Esophagus squamous epithelium (tissue), 5 donors: ENCODE measurements at regions of chr16 and their contacts with region 1.

Region 1: DNA sequence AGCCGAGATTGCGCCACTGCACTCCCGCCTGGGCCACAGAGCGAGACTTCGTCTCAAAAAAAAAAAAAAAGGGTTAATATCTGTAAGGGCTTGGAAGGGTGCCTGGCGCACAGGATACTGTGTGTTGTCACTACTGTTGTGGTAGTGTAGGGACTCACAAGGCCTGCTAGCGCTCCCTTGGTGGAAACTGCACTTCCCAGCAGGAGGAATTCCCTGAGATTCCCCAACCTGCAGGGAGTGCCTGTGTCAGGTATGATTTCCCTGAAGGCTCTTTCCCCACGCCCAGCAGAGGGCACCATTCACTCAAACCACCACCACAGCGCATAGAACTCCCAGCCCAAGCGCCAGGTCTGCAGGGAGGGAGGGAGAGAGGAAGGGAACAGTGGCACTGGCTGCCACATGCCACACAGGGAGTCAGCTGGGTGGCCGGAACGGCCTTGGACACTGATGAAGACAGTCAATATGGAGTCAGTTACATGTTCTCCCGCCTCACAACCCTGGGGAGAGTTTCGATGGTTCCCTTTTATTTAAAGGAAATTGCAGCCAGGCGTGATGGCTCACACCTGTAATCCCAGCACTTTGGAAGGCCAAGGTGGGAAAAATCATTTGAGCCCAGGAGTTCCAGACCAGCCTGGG is 32.7 kb upstream of the CDH1 start:
- DNase-seq: no peak
- H3K4me3 ChIP-seq: no peak overlapping the region
- H3K27ac ChIP-seq: no peak overlapping the region
- H3K4me1 ChIP-seq: peaks cover 5 to 34% (median 6%) of the 10 kb centered on the region in 3 donors
- H3K27me3 ChIP-seq: peaks cover 0 to 5% (median 0%) of the 10 kb centered on the region in 4 donors
- CTCF ChIP-seq: peak; percentile 66 to 92 (median 85)
- POLR2A ChIP-seq: no peak

Region 2: DNA sequence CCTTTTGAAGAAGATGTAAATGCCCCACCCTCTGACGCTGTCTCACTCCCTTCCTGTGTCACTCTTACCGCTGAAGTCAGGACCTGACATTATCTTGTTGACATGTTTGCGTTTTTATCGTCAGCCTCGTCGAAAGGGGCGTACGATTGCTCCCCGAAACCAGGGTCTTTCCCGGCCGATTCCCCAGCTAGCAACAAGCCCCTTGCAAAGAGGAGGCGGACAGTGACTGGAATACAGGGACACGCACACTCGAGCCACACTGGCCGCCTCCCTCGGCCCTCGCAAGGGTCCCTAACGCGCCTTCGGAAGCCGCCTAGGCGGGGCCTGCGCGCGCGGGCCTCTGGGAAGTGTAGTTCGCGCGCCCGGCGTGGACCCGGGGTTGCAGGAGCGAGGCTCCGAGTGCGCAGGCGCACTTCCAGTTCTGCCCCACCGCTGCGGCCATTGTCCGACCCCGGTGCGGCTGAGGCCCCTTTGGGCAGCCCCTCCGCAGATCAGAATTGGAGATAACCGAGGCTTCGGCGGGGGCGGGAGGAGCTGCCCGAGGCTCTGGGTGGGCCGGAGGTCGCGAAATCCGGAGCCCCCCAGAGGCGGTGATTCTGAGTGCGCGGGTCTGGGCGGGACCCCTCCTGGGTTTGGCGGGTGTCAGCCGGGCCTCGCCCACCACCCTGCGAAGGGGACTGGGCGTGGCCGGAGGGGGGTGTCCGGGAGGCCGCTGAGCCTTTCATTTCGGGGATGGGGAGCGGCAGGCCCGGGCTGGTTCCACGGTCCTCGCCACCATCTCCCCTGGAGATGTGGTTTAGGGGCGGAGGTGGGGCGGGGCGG is 165.3 kb before region 1 on chr16 and contains the start of gene ZFP90:
- intact Hi-C with region 1: loop called (anchors 10 kb)
- DNase-seq: peak; percentile 32
- H3K4me3 ChIP-seq: peak within 1 kb of the TSS; percentile 78 to 99 (median 92)
- H3K27ac ChIP-seq: peak within 1 kb of the TSS; percentile 84 to 89 (median 88)
- H3K4me1 ChIP-seq: peaks cover 7 to 19% (median 8%) of the 10 kb centered on the region in 3 donors
- H3K27me3 ChIP-seq: no peaks in the 10 kb centered on the region
- CTCF ChIP-seq: peak in 1 of 6 experiments; percentile 17
- POLR2A ChIP-seq: peak in 2 of 4 donors; percentile 48 to 66
- total RNA-seq, gene ZFP90: 8.1 to 22.5 (median 13.8) TPM

Region 3: GRCh38 chr16:68744369-68745280 is 40.3 kb after region 1 on chr16:
- intact Hi-C with region 1: no loop called
- DNase-seq: no peak
- H3K4me3 ChIP-seq: peak overlapping the region in 2 of 4 donors; percentile 15 to 28
- H3K27ac ChIP-seq: peak overlapping the region; percentile 69 to 91 (median 82)
- H3K4me1 ChIP-seq: peaks cover 21 to 84% (median 21%) of the 10 kb centered on the region in 3 donors
- H3K27me3 ChIP-seq: no peaks in the 10 kb centered on the region
- CTCF ChIP-seq: no peak
- POLR2A ChIP-seq: no peak

Region 4: DNA sequence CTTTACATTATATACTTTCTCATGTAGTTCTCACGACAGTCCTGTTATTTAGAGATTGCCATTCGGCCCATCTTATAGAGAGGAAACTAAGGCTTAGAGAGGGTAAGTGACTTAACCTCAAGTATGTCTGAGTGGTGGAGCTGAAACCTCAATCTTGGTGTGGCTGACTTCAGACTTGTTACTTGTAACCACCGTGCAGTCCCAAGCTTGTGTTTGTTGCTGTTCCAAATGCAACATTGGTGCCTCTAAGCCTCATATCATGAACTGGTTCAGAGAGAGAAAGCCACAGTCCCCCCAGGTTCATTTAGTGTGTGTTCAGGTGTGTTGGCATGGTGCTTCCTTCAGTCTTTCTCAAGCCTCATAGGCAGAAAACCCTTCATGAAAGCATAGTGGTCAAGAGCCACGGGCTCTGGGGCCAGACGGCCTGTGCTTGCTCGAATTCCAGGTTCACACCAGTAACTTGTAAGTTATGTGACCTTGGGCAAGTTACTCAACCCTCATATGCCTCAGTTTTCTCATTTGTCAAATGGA is 72.5 kb after region 1 on chr16:
- intact Hi-C with region 1: no loop called
- DNase-seq: no peak
- H3K4me3 ChIP-seq: no peak overlapping the region
- H3K27ac ChIP-seq: peak overlapping the region in 3 of 4 donors; percentile 10 to 87 (median 25)
- H3K4me1 ChIP-seq: peaks cover 9 to 67% (median 26%) of the 10 kb centered on the region in 3 donors
- H3K27me3 ChIP-seq: no peaks in the 10 kb centered on the region
- CTCF ChIP-seq: no peak
- POLR2A ChIP-seq: no peak

Region 5: DNA sequence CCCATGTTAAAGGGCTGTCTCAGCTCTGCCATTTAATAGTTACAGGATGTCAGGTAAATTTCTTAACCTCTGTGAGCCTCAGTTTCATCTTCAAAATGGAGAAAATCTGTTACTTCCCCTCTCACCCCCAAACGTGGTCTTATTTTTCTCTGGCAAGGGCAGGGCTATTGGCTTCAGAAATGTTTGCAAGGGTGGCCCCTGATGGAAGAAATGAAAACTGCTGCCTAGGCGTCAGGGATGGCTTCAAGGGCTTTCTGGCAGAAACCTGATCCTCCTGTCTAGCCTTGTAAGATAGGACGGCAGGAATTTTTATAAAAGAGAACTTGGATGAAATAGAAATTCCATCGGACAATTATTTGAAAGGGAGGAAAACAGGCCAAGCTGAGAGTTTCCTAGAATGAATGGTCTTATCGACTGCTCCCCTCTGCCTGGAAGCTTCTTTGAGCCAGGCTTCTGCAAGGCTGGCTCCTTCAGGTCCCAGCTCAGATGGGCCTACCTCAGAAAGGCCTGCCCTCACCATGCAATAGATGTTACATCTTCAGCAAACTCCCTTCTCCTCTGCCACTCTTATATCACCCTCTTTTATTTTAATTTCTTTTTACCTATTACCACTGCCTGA is 96.0 kb after region 1 on chr16:
- intact Hi-C with region 1: loop called (anchors 10 kb)
- DNase-seq: no peak
- H3K4me3 ChIP-seq: no peak overlapping the region
- H3K27ac ChIP-seq: peak overlapping the region in 3 of 4 donors; percentile 66 to 81 (median 74)
- H3K4me1 ChIP-seq: peaks cover 0 to 43% (median 5%) of the 10 kb centered on the region in 3 donors
- H3K27me3 ChIP-seq: no peaks in the 10 kb centered on the region
- CTCF ChIP-seq: peak; percentile 14 to 83 (median 74)
- POLR2A ChIP-seq: no peak

Region 6: DNA sequence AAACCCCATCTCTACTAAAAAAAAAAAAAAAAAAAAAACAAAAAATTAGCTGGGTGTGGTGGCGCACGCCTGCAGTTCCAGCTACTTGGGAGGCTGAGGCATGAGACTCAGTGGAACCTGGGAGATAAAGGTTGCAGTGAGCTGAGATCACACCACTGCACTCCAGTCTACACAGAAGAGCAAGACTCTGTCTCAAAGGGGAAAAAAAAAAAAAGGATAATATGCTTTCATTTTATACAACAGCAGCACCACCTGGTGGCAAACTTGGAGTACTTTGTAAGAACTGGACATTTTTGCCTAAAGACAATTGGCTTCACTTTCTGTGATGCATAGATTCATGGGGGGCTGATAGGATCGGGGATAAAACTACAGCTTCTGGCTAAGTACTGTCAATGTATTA is 419.6 kb after region 1 on chr16:
- intact Hi-C with region 1: loop called (anchors 10 kb)
- DNase-seq: no peak
- H3K4me3 ChIP-seq: no peak overlapping the region
- H3K27ac ChIP-seq: no peak overlapping the region
- H3K4me1 ChIP-seq: peaks cover 0 to 25% (median 4%) of the 10 kb centered on the region in 3 donors
- H3K27me3 ChIP-seq: no peaks in the 10 kb centered on the region
- CTCF ChIP-seq: peak; percentile 45 to 80 (median 68)
- POLR2A ChIP-seq: no peak